ENCODE measurements at regions of chr3 and their contacts with region 1.

Region 1: GRCh38 chr3:15629860-15630597 is 28.5 kb downstream of the BTD start:
- DNase-seq: peak; percentile 65
- H3K4me3 ChIP-seq: peak overlapping the region in 1 of 4 donors; percentile 26
- H3K27ac ChIP-seq: peak overlapping the region; percentile 24 to 61 (median 30)
- H3K4me1 ChIP-seq: peaks cover 0 to 24% (median 4%) of the 10 kb centered on the region in 4 donors
- H3K27me3 ChIP-seq: no peaks in the 10 kb centered on the region
- CTCF ChIP-seq: peak; percentile 59 to 83 (median 67)
- EP300 ChIP-seq: no peak
- POLR2A ChIP-seq: no peak

Region 2: DNA sequence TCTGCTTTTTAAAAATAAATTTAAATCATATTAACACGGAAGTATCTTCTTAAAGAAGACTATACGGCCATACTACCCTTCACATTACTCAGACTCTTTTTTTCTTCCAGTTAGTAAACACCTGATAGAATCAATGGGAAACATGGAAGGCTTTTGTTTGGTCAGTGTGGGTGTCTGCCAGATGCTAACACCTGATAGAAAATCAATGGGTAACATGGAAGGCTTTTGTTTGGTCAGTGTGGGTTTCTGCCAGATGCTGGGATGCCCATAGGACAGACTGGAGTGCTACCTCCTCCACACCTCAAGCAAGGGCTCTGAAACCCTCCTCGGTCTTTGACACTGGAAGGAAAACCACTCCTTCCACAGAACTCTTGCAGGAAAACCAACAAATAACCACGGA is 57.9 kb before region 1 on chr3:
- in situ Hi-C with region 1: no loop called
- intact Hi-C with region 1: no loop called
- DNase-seq: no peak
- H3K4me3 ChIP-seq: no peak overlapping the region
- H3K27ac ChIP-seq: no peak overlapping the region
- H3K4me1 ChIP-seq: no peaks in the 10 kb centered on the region
- H3K27me3 ChIP-seq: no peaks in the 10 kb centered on the region
- CTCF ChIP-seq: no peak
- EP300 ChIP-seq: no peak
- POLR2A ChIP-seq: no peak

Region 3: GRCh38 chr3:15805756-15806266 is 175.8 kb after region 1 on chr3:
- in situ Hi-C with region 1: loop called (anchors 5 to 25 kb)
- intact Hi-C with region 1: loop called (anchors 5 kb)
- DNase-seq: no peak
- H3K4me3 ChIP-seq: no peak overlapping the region
- H3K27ac ChIP-seq: peak overlapping the region in 3 of 4 donors; percentile 3 to 49 (median 6)
- H3K4me1 ChIP-seq: peaks cover 0 to 29% (median 5%) of the 10 kb centered on the region in 4 donors
- H3K27me3 ChIP-seq: no peaks in the 10 kb centered on the region
- CTCF ChIP-seq: no peak
- EP300 ChIP-seq: no peak
- POLR2A ChIP-seq: no peak

Region 4: DNA sequence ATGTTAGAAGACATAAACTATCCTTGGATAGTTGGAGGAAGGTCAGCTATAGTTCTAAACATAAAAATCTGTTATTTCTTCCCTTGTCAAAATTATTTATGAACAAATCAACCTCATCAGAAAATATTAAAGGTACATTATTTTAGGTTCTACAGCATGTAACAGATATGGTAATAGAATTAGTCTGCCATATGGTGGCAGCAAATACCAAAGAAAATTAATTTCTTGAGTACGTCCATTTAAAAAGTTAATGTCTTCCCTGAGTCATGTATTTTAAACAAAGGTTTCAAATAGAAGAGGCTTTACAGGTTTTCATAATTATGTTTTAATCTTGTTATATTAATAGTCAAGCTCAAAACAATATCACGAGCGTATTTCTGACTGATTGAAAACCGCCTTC is 185.7 kb after region 1 on chr3:
- in situ Hi-C with region 1: loop called in 3 of 4 experiments (anchors 5 to 25 kb)
- intact Hi-C with region 1: loop called (anchors 5 kb)
- DNase-seq: no peak
- H3K4me3 ChIP-seq: no peak overlapping the region
- H3K27ac ChIP-seq: no peak overlapping the region
- H3K4me1 ChIP-seq: peaks cover 0 to 24% (median 8%) of the 10 kb centered on the region in 4 donors
- H3K27me3 ChIP-seq: no peaks in the 10 kb centered on the region
- CTCF ChIP-seq: peak in 4 of 5 experiments; percentile 18 to 27 (median 22)
- EP300 ChIP-seq: no peak
- POLR2A ChIP-seq: no peak

Region 5: DNA sequence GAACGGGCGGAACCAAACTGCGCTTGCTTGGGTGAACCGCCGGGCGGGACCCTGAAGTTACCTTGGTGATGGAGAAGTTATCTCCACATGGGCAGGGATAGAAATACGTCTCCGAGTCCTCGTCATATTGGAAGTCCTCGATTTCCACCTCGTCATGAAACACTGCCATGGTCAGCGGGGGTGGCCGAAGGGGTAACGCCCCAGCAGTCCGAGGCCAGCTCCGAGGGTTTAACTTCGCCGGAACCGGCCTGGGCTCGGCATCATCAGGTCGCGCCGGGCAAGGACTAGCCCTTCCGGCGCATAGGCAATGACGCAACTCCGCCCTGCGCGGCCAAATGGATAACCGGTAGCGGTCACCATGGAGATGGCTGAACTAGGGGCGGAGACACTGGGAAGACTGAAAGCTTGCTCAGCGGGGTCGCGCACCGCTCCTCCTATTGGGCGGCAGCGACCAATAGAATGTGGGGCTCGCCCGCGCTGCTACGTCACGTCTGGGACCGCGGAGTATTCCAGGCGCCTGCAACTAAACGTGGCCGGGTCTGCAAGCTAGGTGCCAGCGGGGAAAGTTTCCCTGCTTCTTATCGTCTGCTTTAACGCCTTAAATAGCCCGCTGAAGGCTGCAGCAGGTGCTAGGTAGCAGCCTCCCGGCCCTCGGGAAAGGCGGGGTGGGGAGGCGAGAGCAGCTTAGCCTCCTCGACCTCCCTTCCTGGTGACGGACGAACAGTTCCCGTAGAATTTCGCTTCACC is 634.9 kb after region 1 on chr3 and contains the starts of genes DPH3 and OXNAD1:
- in situ Hi-C with region 1: loop called in 1 of 4 experiments (anchors 25 kb)
- intact Hi-C with region 1: no loop called
- DNase-seq: peak; percentile 100
- H3K4me3 ChIP-seq: peak within 1 kb of the TSS; percentile 69 to 83 (median 76)
- H3K27ac ChIP-seq: peak within 1 kb of the TSS; percentile 92 to 97 (median 93)
- H3K4me1 ChIP-seq: peaks cover 7 to 47% (median 29%) of the 10 kb centered on the region in 4 donors
- H3K27me3 ChIP-seq: no peaks in the 10 kb centered on the region
- CTCF ChIP-seq: peak; percentile 2 to 79 (median 18)
- EP300 ChIP-seq: no peak
- POLR2A ChIP-seq: peak; percentile 92
- total RNA-seq, gene DPH3: 5.0 to 22.4 (median 12.4) TPM
- total RNA-seq, gene OXNAD1: 20.6 to 91.1 (median 40.0) TPM

Measured in transverse colon (tissue), 4 donors.